Ovary (tissue), 10 donors: ENCODE measurements at regions of chr12 and their contacts with region 1.

Region 1: GRCh38 chr12:91718326-91718725 is 427.3 kb downstream of the BTG1 start:
- DNase-seq: no peak
- H3K4me3 ChIP-seq: no peak overlapping the region
- H3K27ac ChIP-seq: no peak overlapping the region
- H3K4me1 ChIP-seq: no peaks in the 10 kb centered on the region
- H3K27me3 ChIP-seq: no peaks in the 10 kb centered on the region
- CTCF ChIP-seq: no peak
- EP300 ChIP-seq: no peak
- POLR2A ChIP-seq: no peak

Region 2: DNA sequence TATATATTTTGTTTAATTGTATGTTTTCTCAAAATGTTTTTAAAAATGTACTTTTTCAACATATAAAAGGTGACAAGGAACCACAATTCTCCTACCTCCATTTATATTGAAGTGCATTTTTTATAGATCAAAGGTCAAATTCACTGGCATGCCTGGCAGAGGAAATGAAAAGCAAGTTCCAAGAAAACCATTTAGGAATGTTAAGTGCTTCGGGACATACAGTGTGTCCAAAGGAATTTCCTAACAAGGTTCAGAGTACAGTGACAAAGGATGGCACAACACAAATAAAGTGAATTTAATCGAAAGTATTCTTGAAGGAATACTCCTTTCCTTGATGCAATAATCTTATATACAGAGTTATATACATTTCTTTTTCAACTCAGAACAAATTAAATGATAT is 1005.7 kb before region 1 on chr12:
- intact Hi-C with region 1: no loop called
- DNase-seq: no peak
- H3K4me3 ChIP-seq: no peak overlapping the region
- H3K27ac ChIP-seq: no peak overlapping the region
- H3K4me1 ChIP-seq: no peaks in the 10 kb centered on the region
- H3K27me3 ChIP-seq: no peaks in the 10 kb centered on the region
- CTCF ChIP-seq: no peak
- EP300 ChIP-seq: no peak
- POLR2A ChIP-seq: no peak

Region 3: DNA sequence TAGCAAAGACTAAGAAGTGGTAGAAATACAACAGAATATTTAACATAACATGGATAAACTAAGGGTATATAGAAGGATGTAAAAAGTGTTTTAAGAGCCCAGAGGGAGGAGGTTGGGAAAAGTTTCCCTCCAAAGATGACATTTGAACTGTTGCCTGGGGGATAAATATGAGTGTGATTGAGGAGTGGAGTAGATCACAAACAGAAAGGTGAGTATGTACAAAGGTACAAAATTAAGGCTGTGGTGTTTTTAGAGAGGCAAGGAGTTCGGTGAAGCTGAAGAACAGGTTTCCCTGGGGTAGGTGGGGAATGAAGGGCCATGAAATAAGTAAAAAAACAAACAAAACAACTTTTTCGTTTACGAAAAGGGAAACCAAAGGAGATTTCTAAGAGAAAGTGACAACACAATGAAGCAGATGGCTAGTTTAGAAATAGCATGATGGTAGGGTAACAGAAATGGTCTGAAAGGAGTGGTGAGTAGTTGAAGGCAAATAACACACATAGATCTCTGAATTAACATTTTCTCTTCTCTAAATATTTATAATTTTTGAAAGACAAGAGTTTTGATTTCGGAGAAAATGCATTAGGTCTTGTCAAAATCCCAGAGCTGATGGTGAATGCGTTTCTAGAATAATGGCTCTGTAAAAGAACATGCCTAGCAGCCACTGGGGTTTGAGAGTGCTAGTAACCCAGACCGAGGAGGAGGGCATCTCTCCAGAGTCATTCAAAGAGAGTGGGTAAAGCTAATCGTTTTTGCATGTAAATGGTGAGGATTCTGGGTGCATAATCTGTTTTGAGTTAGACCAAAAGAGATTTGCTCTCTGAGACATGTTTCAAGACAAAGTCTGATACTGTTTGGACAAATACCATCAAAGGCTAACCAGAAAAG is 295.3 kb before region 1 on chr12:
- intact Hi-C with region 1: no loop called
- DNase-seq: no peak
- H3K4me3 ChIP-seq: no peak overlapping the region
- H3K27ac ChIP-seq: no peak overlapping the region
- H3K4me1 ChIP-seq: no peaks in the 10 kb centered on the region
- H3K27me3 ChIP-seq: no peaks in the 10 kb centered on the region
- CTCF ChIP-seq: no peak
- EP300 ChIP-seq: no peak
- POLR2A ChIP-seq: no peak

Region 4: DNA sequence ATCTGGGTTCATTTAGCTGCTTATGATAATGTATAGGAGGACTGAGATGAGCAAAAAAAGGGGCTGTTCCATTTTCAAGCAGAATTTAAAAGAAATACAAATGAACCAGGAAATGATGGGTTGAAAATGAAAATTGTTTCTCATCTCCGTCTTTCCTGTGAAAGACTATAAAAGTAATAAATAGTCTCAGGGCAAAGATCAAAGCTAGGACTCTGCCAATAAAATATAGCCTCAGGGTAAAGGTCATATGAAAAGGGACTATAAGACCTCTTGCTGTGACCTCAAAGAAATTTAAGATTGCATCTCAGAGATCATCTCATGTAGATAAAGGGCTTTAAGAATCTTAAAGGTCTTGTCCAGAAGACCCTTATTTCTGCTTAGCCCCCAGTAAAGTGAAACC is 50.6 kb before region 1 on chr12:
- intact Hi-C with region 1: loop called in 1 of 4 experiments (anchors 2 kb)
- DNase-seq: no peak
- H3K4me3 ChIP-seq: no peak overlapping the region
- H3K27ac ChIP-seq: no peak overlapping the region
- H3K4me1 ChIP-seq: no peaks in the 10 kb centered on the region
- H3K27me3 ChIP-seq: no peaks in the 10 kb centered on the region
- CTCF ChIP-seq: no peak
- EP300 ChIP-seq: no peak
- POLR2A ChIP-seq: no peak